Gastrocnemius medialis (tissue), 4 donors: ENCODE measurements at regions of chr7 and their contacts with region 1.

Region 1: DNA sequence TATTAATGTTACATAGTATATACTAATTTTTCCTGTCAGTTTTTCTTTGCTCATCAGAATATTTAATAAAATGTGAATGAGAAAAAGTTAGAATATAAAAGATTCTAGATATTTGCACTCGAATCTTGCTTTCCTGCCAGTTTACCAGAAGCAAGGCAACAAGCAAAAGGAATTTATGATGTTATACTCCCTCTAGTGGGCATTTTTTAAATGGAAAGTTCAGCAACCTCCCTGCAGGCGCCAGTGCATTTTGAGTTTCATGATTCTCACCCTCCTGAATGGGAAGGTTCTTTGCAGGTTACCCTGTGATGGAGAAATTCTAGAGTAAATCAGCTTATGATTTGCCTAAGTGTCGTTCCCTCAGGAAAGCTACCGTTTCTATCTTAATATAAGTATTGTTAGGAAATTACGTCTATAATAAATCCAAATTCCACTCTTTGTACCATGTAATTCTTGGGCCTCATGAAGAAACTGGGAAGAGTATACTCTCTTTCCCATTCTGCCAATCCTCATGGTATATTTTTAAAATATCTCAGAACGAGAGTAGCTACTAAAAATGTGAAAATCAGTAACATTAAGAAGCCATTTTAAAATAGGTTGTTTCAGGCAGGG is 350.0 kb downstream of the CRPPA start:
- DNase-seq: no peak
- ATAC-seq: peak in 1 of 2 donors; percentile 35
- H3K4me3 ChIP-seq: peak overlapping the region in 1 of 4 donors; percentile 24
- H3K27ac ChIP-seq: peak overlapping the region in 3 of 4 donors; percentile 72 to 82 (median 74)
- H3K4me1 ChIP-seq: peaks cover 0 to 15% of the 10 kb centered on the region in 2 donors
- H3K27me3 ChIP-seq: no peaks in the 10 kb centered on the region
- CTCF ChIP-seq: peak; percentile 64 to 85 (median 78)
- POLR2A ChIP-seq: no peak

Region 2: GRCh38 chr7:15305002-15305600 is 766.3 kb before region 1 on chr7:
- in situ Hi-C with region 1: loop called (anchors 10 to 25 kb)
- intact Hi-C with region 1: loop called (anchors 5 kb)
- DNase-seq: no peak
- ATAC-seq: no peak
- H3K4me3 ChIP-seq: no peak overlapping the region
- H3K27ac ChIP-seq: no peak overlapping the region
- H3K4me1 ChIP-seq: no peaks in the 10 kb centered on the region
- H3K27me3 ChIP-seq: no peaks in the 10 kb centered on the region
- CTCF ChIP-seq: peak; percentile 26 to 68 (median 40)
- POLR2A ChIP-seq: no peak

Region 3: DNA sequence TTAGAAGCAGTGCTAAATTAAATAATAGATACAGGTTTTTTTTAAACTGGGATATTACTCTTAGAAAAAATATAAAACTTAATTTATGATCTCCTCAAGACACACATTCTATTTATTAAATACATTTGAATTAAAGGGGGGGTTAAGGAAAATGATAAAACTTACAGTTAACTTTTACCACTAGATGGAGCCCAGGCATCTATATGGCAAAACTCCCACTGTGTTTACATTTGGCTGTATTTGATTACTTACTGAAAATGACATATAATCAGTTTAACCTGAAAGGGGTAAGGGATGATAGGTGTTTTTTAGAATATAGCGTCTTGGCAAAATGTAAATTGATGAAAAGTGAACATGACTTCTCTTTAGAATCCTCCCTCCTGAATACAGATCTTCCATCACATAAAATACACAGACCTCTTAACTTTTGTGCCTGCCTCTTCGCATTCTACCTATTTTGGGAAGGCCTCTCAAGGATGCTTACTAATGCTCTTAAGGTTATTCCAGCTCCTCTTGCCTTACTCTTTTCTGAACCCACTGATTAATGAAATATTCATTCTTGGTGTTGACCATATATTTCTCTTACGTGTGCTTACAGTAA is 745.2 kb before region 1 on chr7:
- in situ Hi-C with region 1: loop called in 1 of 4 experiments (anchors 25 kb)
- intact Hi-C with region 1: loop called (anchors 5 kb)
- DNase-seq: no peak
- ATAC-seq: no peak
- H3K4me3 ChIP-seq: no peak overlapping the region
- H3K27ac ChIP-seq: no peak overlapping the region
- H3K4me1 ChIP-seq: peaks cover 0 to 8% of the 10 kb centered on the region in 2 donors
- H3K27me3 ChIP-seq: no peaks in the 10 kb centered on the region
- CTCF ChIP-seq: peak in 4 of 5 experiments; percentile 11 to 56 (median 36)
- POLR2A ChIP-seq: no peak

Region 4: GRCh38 chr7:15561835-15562234 is 509.5 kb before region 1 on chr7 and contains the start of gene AGMO:
- in situ Hi-C with region 1: loop called in 2 of 4 experiments (anchors 10 to 25 kb)
- intact Hi-C with region 1: loop called (anchors 10 kb)
- DNase-seq: peak; percentile 10 to 48
- ATAC-seq: peak; percentile 56 to 66
- H3K4me3 ChIP-seq: peak within 1 kb of the TSS; percentile 7 to 41 (median 32)
- H3K27ac ChIP-seq: peak within 1 kb of the TSS; percentile 66 to 74 (median 73)
- H3K4me1 ChIP-seq: no peaks in the 10 kb centered on the region
- H3K27me3 ChIP-seq: no peaks in the 10 kb centered on the region
- CTCF ChIP-seq: no peak
- POLR2A ChIP-seq: no peak
- total RNA-seq, gene AGMO: 0.11 to 0.55 TPM in 2 of 4 donors, not detected in the others

Region 5: DNA sequence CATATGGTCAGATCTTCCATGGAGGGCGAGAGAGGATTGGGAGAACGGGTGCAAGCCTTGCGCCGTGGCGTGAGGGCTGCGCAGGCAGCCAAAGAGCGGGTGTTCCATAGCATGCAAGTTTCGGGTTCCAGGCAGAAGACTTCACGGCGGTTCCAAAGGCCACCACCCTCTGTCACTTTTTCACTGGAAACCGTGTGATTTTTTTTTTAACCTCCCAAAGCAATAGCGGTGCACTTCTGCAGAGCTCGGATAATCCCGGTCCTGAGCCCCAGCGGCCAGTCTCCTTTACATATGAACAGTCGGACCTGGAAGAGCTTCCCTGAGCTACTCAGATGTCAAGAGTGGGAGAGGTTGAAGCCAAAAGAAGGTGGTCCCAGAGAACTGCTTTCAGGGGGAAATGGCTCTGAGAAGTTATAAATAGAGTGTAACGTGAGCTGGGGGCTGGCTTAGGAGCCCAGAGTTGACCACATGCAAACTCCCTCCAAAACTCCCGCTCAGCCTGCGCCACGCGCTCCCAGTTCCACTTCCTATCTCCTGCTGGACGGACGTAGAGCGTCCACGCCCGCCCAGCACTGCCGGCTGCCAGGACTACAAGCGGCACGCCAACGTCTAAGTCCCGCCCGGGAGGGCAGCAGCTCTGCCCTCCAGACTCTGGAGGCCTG is 384.9 kb before region 1 on chr7 and contains the start of gene MEOX2:
- in situ Hi-C with region 1: loop called in 3 of 4 experiments (anchors 5 to 25 kb)
- intact Hi-C with region 1: no loop called
- DNase-seq: peak; percentile 55 to 75
- ATAC-seq: peak; percentile 75
- H3K4me3 ChIP-seq: peak within 1 kb of the TSS; percentile 58 to 70 (median 64)
- H3K27ac ChIP-seq: peak within 1 kb of the TSS; percentile 83 to 86 (median 84)
- H3K4me1 ChIP-seq: no peaks in the 10 kb centered on the region
- H3K27me3 ChIP-seq: peaks cover 8 to 46% (median 44%) of the 10 kb centered on the region in 3 donors
- CTCF ChIP-seq: no peak
- POLR2A ChIP-seq: peak; percentile 61 to 84
- total RNA-seq, gene MEOX2: 4.3 to 16.2 (median 7.3) TPM

Region 6: GRCh38 chr7:15905251-15906040 is 165.9 kb before region 1 on chr7:
- in situ Hi-C with region 1: no loop called
- intact Hi-C with region 1: no loop called
- DNase-seq: no peak
- ATAC-seq: no peak
- H3K4me3 ChIP-seq: no peak overlapping the region
- H3K27ac ChIP-seq: no peak overlapping the region
- H3K4me1 ChIP-seq: peaks cover 10 to 11% of the 10 kb centered on the region in 2 donors
- H3K27me3 ChIP-seq: no peaks in the 10 kb centered on the region
- CTCF ChIP-seq: no peak
- POLR2A ChIP-seq: no peak

Region 7: DNA sequence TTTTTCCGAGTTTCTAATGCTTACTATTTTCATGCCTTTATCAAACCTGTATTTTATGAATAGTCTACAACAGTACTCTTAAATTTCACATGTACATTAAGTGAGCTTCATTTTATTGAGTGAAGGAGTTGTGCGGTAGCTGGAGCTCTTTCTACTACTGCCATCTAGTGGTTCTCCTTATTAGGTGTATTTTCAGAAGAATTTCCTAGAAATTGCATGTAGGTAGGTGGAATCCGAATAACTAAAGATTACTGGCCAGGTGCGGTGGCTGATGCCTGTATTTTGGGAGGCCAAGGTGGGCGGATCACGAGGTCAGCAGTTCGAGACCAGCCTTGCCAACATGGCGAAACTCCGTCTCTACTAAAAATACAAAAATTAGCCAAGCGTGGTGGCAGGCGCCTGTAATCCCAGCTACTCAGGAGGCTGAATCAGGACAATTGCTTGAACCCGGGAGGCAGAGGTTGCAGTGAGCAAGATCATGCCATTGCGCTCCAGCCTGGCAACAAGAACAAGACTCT is 493.6 kb after region 1 on chr7:
- in situ Hi-C with region 1: loop called in 2 of 4 experiments (anchors 5 to 10 kb)
- intact Hi-C with region 1: no loop called
- DNase-seq: no peak
- ATAC-seq: peak in 1 of 2 donors; percentile 44
- H3K4me3 ChIP-seq: no peak overlapping the region
- H3K27ac ChIP-seq: no peak overlapping the region
- H3K4me1 ChIP-seq: no peaks in the 10 kb centered on the region
- H3K27me3 ChIP-seq: no peaks in the 10 kb centered on the region
- CTCF ChIP-seq: peak in 4 of 5 experiments; percentile 41 to 75 (median 67)
- POLR2A ChIP-seq: no peak